Mammary epithelial cell (primary cell): ENCODE measurements at regions of chr1 and their contacts with region 1.

Region 1: DNA sequence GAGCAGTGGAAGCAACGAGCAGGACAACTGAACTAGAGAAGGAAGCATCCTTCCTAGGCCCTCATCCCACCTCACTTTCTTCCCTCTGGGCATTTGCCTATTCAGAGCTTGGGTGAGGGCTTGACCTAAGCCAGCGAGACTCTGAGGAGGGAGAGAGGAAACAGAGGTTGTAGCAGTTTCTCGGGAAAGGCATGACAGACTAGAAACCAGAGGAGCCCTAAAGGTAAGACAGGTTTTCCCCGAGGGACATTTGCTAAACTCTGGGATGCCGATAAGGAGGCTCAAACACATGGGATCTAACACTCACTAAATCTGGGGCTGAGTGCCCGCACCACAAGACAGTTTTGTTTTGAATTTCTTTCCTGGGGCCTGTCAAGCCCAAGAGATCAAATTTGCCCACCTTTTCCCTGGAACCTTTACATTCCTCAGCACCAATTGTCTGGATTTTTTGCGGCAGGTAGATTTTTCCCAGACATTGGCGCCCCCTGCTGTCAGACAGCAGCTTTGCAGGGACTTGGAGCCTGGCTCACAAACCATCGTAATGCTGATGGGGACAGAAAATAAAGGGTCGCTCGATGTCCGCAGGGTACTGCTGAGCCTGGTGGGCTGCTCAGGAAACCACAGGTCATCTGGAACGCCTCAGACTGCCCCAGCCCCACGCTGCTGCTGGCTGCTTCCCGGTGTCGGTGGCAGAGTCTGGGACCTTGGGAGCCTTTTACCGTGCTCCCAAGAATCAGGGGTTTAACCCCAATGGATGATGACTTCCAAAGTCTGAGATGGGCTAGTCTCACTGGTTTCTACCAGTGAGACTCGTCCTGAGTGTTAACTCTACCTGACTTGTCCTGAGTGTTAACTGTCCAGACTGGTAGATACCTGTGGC is 23.4 kb upstream of the TSPAN2 start:
- DNase-seq: no peak
- H3K4me3 ChIP-seq: no peak overlapping the region
- H3K27ac ChIP-seq: no peak overlapping the region
- H3K4me1 ChIP-seq: peaks cover 23% of the 10 kb centered on the region
- H3K27me3 ChIP-seq: no peaks in the 10 kb centered on the region
- CTCF ChIP-seq: peak; percentile 93 to 94

Region 2: GRCh38 chr1:115041654-115042053 is 71.1 kb before region 1 on chr1:
- CTCF ChIA-PET with region 1: no interaction called
- dilution Hi-C with region 1: no loop called
- in situ Hi-C with region 1: no loop called
- intact Hi-C with region 1: loop called (anchors 2 kb)
- DNase-seq: peak; percentile 33
- H3K4me3 ChIP-seq: no peak overlapping the region
- H3K27ac ChIP-seq: no peak overlapping the region
- H3K4me1 ChIP-seq: no peaks in the 10 kb centered on the region
- H3K27me3 ChIP-seq: no peaks in the 10 kb centered on the region
- CTCF ChIP-seq: peak; percentile 62 to 83

Region 3: DNA sequence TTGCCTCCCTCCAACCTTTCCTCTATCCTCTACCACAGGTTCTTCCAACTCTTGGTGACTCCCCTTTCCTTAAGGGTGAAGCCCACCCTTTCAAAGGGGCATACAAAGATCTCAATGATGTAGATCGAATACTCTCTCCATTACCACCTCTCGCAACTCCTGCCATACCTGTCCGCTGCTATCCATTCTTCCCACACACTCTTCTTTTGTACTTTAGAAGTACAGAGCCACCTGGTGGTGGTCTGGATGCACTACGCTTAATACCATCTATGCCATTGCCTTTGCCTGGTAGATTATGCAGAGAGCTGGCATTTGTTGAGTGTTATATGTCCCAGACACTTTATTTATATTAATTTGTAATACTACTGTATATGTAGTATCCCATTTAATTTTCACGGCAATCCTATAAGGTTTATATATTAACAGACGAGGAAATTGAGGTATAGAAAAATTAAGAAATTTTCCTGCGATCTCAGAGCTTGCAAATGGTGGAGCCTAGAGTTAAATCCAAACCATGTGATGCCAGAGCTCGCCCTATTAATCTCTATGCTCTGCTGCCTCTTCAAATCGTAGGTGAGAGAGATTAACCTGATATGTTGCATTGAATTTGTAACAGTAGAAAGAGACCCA is 60.2 kb before region 1 on chr1:
- CTCF ChIA-PET with region 1: interaction called, 7 read pairs
- dilution Hi-C with region 1: no loop called
- in situ Hi-C with region 1: no loop called
- intact Hi-C with region 1: loop called (anchors 1 kb)
- DNase-seq: peak; percentile 63
- H3K4me3 ChIP-seq: no peak overlapping the region
- H3K27ac ChIP-seq: no peak overlapping the region
- H3K4me1 ChIP-seq: peaks cover 12% of the 10 kb centered on the region
- H3K27me3 ChIP-seq: no peaks in the 10 kb centered on the region
- CTCF ChIP-seq: peak; percentile 87 to 94

Region 4: GRCh38 chr1:115469703-115470476 is 357.2 kb after region 1 on chr1:
- CTCF ChIA-PET with region 1: no interaction called
- dilution Hi-C with region 1: no loop called
- in situ Hi-C with region 1: no loop called
- intact Hi-C with region 1: loop called (anchors 1 kb)
- DNase-seq: peak; percentile 74
- H3K4me3 ChIP-seq: no peak overlapping the region
- H3K27ac ChIP-seq: peak overlapping the region; percentile 31
- H3K4me1 ChIP-seq: peaks cover 28% of the 10 kb centered on the region
- H3K27me3 ChIP-seq: no peaks in the 10 kb centered on the region
- CTCF ChIP-seq: peak; percentile 93 to 98